ENCODE measurements at regions of chr4 and their contacts with region 1.

Region 1: DNA sequence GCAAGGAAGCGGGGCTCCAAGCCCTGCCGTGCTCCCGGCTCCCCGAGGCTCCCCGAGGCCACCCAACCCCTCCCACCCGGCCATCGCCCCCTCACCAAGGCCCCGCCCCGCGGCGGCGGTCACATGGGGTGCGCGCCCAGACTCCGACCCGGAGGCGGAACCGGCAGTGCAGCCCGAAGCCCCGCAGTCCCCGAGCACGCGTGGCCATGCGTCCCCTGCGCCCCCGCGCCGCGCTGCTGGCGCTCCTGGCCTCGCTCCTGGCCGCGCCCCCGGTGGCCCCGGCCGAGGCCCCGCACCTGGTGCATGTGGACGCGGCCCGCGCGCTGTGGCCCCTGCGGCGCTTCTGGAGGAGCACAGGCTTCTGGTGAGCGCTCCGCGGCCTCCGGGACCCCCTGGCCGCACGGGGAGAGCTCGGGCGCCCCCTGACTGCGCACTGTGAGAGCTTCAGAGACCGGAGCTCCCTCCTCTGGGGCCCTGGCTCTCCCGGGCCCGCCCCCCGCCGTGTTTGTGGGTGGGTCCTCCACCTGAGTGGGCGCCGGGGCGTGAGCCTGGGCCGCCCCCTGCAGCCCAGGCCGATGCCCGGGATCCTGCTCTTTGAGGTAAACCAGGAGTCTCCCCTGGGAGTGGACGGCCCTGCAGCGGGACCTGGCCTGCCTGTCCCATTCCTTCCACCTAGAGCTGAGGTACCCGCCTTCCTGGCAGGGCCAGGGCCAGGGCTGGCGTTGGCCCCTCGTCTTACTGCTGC is at the start of gene IDUA:
- DNase-seq: peak; percentile 93
- ATAC-seq: peak; percentile 82
- H3K4me3 Mint-ChIP-seq: peak within 1 kb of the TSS; percentile 85
- H3K27ac Mint-ChIP-seq: peak within 1 kb of the TSS; percentile 88
- H3K4me1 Mint-ChIP-seq: peaks cover 13% of the 10 kb centered on the region
- H3K27me3 Mint-ChIP-seq: no peaks in the 10 kb centered on the region
- total RNA-seq, gene IDUA: 6.4 to 9.0 TPM

Region 2: GRCh38 chr4:602559-602942 is 384.5 kb before region 1 on chr4:
- CTCF ChIA-PET with region 1: no interaction called
- POLR2A ChIA-PET with region 1: no interaction called
- intact Hi-C with region 1: loop called in 1 of 2 experiments (anchors 2 kb)
- DNase-seq: peak; percentile 90
- ATAC-seq: peak; percentile 69
- H3K4me3 Mint-ChIP-seq: no peak overlapping the region
- H3K27ac Mint-ChIP-seq: no peak overlapping the region
- H3K4me1 Mint-ChIP-seq: peaks cover 19% of the 10 kb centered on the region
- H3K27me3 Mint-ChIP-seq: peaks cover 11% of the 10 kb centered on the region

Region 3: DNA sequence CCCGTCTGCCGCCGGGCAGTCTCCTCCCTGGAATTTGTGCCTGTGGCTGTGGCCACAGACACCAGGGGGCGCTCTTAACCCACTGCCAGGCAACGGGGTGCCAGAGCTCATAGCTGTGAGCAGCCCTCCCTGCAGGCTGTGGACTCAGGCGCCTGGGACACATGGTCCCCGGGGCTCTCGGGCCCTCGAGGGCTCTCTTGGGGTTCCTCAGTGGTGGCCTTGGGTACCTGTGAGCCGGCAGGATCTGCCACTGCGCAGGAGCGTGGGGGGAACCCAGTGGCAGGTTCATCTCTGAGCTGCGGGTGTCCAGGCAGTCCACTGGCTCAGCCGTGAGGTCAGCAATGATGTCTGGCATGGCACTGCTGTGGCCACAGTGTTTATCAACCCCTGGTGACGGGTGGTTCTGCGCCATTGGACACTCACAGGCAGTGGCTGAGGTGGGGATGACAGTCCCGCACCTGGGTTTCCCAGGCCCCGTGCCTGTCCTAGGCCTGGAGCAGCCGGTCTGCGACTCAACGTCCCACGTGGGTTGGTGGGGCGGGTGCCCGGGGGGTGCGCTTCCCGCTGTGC is 244.2 kb before region 1 on chr4:
- CTCF ChIA-PET with region 1: interaction called, 3 read pairs
- POLR2A ChIA-PET with region 1: no interaction called
- intact Hi-C with region 1: loop called (anchors 2 to 5 kb)
- DNase-seq: peak; percentile 89
- ATAC-seq: peak; percentile 95
- H3K4me3 Mint-ChIP-seq: no peak overlapping the region
- H3K27ac Mint-ChIP-seq: no peak overlapping the region
- H3K4me1 Mint-ChIP-seq: no peaks in the 10 kb centered on the region
- H3K27me3 Mint-ChIP-seq: no peaks in the 10 kb centered on the region

Region 4: GRCh38 chr4:876780-877179 is 110.3 kb before region 1 on chr4:
- CTCF ChIA-PET with region 1: no interaction called
- POLR2A ChIA-PET with region 1: no interaction called
- intact Hi-C with region 1: loop called in 1 of 2 experiments (anchors 2 kb)
- DNase-seq: peak; percentile 30
- ATAC-seq: no peak
- H3K4me3 Mint-ChIP-seq: no peak overlapping the region
- H3K27ac Mint-ChIP-seq: no peak overlapping the region
- H3K4me1 Mint-ChIP-seq: peaks cover 28% of the 10 kb centered on the region
- H3K27me3 Mint-ChIP-seq: no peaks in the 10 kb centered on the region

Region 5: DNA sequence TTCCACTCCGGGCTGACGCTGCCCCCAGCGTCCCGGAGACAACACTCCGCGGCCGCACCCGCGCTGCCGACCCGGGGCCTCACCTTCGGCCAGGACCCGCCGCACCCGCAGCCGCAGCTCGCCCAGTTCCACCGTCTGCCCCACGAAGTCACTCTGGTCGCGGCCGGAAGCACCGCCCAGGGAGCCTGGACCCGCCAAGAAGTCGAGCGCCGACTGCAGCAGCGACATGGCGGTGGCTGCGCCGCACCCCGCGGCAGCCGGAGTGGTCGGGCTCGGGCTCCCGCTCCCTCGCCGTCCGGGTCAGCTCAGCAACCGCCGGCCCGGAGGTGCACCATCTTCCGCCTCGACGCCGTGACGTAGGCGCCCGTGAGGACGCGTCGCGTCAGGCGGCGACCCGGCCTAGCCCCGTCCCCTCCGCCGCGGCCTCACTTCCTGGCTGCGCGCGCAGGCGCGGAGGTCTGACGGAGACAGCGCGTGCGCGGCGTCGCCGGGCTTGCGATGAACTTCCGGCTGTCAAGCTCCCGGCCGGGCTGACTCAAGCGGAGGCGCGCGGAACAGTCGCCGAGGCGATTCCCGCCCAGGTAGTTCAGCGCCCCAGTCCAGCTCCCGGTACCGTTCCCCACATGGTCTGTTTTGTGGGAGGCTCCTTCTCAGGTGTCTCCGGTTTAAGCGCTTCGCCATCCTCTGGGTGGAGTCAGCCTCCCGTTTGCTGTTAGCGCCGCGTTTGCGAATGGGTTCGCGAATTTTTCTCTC is 54.9 kb before region 1 on chr4 and contains the starts of genes GAK and TMEM175:
- CTCF ChIA-PET with region 1: interaction called, 3 read pairs
- POLR2A ChIA-PET with region 1: no interaction called
- intact Hi-C with region 1: loop called (anchors 1 to 5 kb)
- DNase-seq: peak; percentile 98
- ATAC-seq: peak; percentile 95
- H3K4me3 Mint-ChIP-seq: peak within 1 kb of the TSS; percentile 87
- H3K27ac Mint-ChIP-seq: peak within 1 kb of the TSS; percentile 89
- H3K4me1 Mint-ChIP-seq: peaks cover 29% of the 10 kb centered on the region
- H3K27me3 Mint-ChIP-seq: no peaks in the 10 kb centered on the region
- total RNA-seq, gene GAK: 82.9 to 88.0 TPM
- total RNA-seq, gene TMEM175: 15.2 to 17.3 TPM

Region 6: DNA sequence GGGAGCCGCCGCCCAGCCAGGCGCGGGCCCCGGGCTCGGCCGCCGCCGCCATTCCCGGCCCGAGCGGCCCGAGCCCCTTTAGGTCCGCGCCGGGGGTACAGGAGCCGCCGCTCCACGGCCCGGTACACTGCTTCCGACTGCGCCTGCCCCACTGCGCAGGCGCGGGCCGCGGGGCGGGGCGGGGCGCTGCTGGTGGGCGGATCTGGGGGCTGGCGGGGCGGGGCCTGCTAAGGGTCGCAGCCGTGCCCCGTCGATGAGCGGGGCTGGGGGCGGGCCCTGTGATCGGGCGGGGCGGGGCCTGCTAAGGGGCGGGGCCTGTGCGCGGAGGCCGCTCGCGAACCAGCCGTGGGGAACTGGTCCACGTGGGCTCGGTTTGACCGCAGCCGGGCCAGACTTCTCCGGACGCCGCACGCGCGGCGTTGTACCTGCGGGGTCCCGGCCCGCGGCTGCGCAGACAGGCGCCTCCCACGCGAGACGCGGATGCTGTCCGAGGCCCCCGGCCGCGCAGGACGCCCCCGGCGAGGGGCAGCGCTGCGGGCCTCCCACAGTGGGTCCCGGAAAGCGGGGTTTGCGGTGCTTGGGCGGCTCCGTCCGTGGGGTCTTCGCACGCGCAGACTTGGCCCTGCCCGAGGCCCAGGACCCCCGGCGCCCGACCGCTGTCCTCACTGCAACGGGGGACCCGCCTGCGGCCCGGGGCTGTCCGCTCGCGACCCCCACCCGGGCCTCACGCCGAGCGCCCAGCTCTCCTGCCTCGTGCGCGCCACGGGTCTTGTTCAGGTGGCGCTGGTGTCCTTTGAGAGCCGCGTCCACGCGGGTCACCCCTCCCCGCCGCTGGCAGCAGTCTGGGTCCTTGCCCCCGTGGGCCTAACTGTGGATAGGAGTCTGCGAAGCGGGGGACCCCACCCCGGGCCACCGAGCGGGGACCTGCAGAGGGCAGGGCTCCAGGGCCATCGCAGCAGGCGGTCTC is 13.3 kb before region 1 on chr4 and contains the start of gene DGKQ:
- CTCF ChIA-PET with region 1: no interaction called
- POLR2A ChIA-PET with region 1: interaction called, 6 read pairs
- intact Hi-C with region 1: loop called (anchors 1 kb)
- DNase-seq: peak; percentile 93
- ATAC-seq: peak; percentile 96
- H3K4me3 Mint-ChIP-seq: peak within 1 kb of the TSS; percentile 58
- H3K27ac Mint-ChIP-seq: no peak within 1 kb of the TSS
- H3K4me1 Mint-ChIP-seq: peaks cover 6% of the 10 kb centered on the region
- H3K27me3 Mint-ChIP-seq: no peaks in the 10 kb centered on the region
- total RNA-seq, gene DGKQ: 9.3 to 11.3 TPM